Caco-2 (cell line): ENCODE measurements at regions of chr10 and their contacts with region 1.

Region 1: GRCh38 chr10:112314822-112315474 is 31.7 kb downstream of the TECTB start:
- DNase-seq: peak; percentile 73 to 83
- H3K4me3 ChIP-seq: no peak overlapping the region
- H3K4me3 Mint-ChIP-seq: no peak overlapping the region
- H3K27ac Mint-ChIP-seq: no peak overlapping the region
- H3K4me1 ChIP-seq: no peaks in the 10 kb centered on the region
- H3K4me1 Mint-ChIP-seq: peaks cover 6% of the 10 kb centered on the region
- H3K27me3 ChIP-seq: no peaks in the 10 kb centered on the region
- H3K27me3 Mint-ChIP-seq: no peaks in the 10 kb centered on the region
- CTCF ChIP-seq: peak; percentile 88 to 89

Region 2: GRCh38 chr10:111756217-111757061 is 558.5 kb before region 1 on chr10:
- CTCF ChIA-PET with region 1: interaction called, 3 read pairs
- POLR2A ChIA-PET with region 1: no interaction called
- intact Hi-C with region 1: loop called (anchors 1 kb)
- DNase-seq: peak; percentile 68 to 69
- H3K4me3 ChIP-seq: no peak overlapping the region
- H3K4me3 Mint-ChIP-seq: peak overlapping the region; percentile 55
- H3K27ac Mint-ChIP-seq: no peak overlapping the region
- H3K4me1 ChIP-seq: no peaks in the 10 kb centered on the region
- H3K4me1 Mint-ChIP-seq: no peaks in the 10 kb centered on the region
- H3K27me3 ChIP-seq: no peaks in the 10 kb centered on the region
- H3K27me3 Mint-ChIP-seq: peaks cover 7% of the 10 kb centered on the region
- CTCF ChIP-seq: peak; percentile 57 to 78

Region 3: GRCh38 chr10:112071596-112072133 is 243.3 kb before region 1 on chr10:
- CTCF ChIA-PET with region 1: no interaction called
- POLR2A ChIA-PET with region 1: no interaction called
- intact Hi-C with region 1: no loop called
- DNase-seq: no peak
- H3K4me3 ChIP-seq: no peak overlapping the region
- H3K4me3 Mint-ChIP-seq: no peak overlapping the region
- H3K27ac Mint-ChIP-seq: no peak overlapping the region
- H3K4me1 ChIP-seq: no peaks in the 10 kb centered on the region
- H3K4me1 Mint-ChIP-seq: no peaks in the 10 kb centered on the region
- H3K27me3 ChIP-seq: no peaks in the 10 kb centered on the region; the same call in none of the 2 replicates
- H3K27me3 Mint-ChIP-seq: peaks cover 10% of the 10 kb centered on the region
- CTCF ChIP-seq: no peak

Region 4: DNA sequence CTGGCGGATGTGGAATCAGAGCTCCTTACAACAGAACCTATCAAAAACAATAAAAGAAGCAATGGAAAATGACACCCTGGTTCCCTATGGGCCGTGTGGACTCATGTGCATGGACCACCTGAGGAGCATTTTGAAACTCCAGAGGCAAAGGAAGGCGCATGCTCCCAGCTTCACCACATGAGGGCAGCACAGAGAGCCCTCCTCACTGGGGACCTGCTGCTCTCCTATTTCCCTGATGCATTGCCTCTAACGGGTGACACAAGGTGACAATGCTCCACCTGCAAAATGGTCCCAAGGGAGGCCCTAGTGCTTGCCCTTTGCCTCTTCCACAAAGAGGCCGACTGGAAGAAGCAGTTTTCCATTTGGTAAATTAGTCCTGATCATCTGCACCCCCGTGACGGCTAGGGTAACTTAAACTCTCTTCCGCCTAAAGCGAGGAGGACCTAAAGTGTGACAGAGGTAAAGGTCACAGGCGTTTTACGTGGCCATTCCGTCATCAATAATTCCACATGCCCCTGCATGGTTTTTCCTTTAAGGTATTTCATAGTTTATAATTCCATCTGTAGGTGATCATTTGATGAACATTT is 199.1 kb before region 1 on chr10:
- CTCF ChIA-PET with region 1: no interaction called
- POLR2A ChIA-PET with region 1: no interaction called
- intact Hi-C with region 1: loop called (anchors 1 kb)
- DNase-seq: peak; percentile 62 to 73
- H3K4me3 ChIP-seq: no peak overlapping the region
- H3K4me3 Mint-ChIP-seq: no peak overlapping the region
- H3K27ac Mint-ChIP-seq: no peak overlapping the region
- H3K4me1 ChIP-seq: no peaks in the 10 kb centered on the region
- H3K4me1 Mint-ChIP-seq: no peaks in the 10 kb centered on the region
- H3K27me3 ChIP-seq: no peaks in the 10 kb centered on the region
- H3K27me3 Mint-ChIP-seq: peaks cover 10% of the 10 kb centered on the region
- CTCF ChIP-seq: peak; percentile 88 to 91

Region 5: DNA sequence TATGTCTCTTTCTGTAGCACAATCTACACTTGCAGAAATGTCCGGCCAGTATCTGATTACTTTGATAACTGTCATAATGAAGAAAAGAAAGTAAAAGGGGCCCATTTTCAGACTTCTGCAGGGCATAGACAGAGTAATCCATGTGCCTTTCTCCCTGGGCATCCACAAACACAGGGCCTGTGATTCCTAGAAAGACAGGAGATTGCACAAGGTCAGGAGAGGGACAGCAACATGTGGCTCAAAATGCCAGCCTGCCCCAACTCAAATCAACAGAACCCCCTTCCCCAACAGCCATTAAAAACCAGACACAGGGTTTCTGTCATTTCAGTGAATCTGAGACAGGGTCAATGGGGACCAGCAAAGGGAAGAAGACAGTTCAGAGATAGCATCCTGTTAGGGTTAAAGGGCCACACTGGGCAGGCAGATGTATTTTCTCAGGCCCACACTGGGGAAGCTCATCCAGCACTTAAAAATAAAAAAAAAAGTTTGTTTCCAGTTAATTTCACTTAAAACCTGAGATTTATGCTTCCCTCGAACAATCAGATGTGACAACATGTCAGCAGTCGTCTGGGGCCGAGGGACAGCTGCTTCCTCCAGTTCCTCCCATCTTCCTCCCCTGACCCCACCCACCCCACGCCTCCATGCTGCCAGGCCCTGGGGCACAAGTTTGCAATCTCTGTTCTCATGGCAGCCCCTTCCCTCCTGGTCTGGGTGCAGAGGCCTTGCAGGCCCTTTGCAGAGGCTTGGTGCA is 28.3 kb after region 1 on chr10:
- CTCF ChIA-PET with region 1: no interaction called
- POLR2A ChIA-PET with region 1: interaction called, 10 read pairs
- intact Hi-C with region 1: no loop called
- DNase-seq: no peak
- H3K4me3 ChIP-seq: no peak overlapping the region
- H3K4me3 Mint-ChIP-seq: no peak overlapping the region
- H3K27ac Mint-ChIP-seq: no peak overlapping the region
- H3K4me1 ChIP-seq: no peaks in the 10 kb centered on the region
- H3K4me1 Mint-ChIP-seq: no peaks in the 10 kb centered on the region
- H3K27me3 ChIP-seq: no peaks in the 10 kb centered on the region
- H3K27me3 Mint-ChIP-seq: no peaks in the 10 kb centered on the region
- CTCF ChIP-seq: no peak

Region 6: GRCh38 chr10:112507046-112507445 is 192.1 kb after region 1 on chr10:
- CTCF ChIA-PET with region 1: no interaction called
- POLR2A ChIA-PET with region 1: no interaction called
- intact Hi-C with region 1: no loop called
- DNase-seq: no peak
- H3K4me3 ChIP-seq: no peak overlapping the region
- H3K4me3 Mint-ChIP-seq: no peak overlapping the region
- H3K27ac Mint-ChIP-seq: no peak overlapping the region
- H3K4me1 ChIP-seq: no peaks in the 10 kb centered on the region
- H3K4me1 Mint-ChIP-seq: no peaks in the 10 kb centered on the region
- H3K27me3 ChIP-seq: no peaks in the 10 kb centered on the region
- H3K27me3 Mint-ChIP-seq: no peaks in the 10 kb centered on the region
- CTCF ChIP-seq: no peak